IMR-90 (cell line): ENCODE measurements at regions of chr3 and their contacts with region 1.

Region 1: GRCh38 chr3:108406661-108407206 is 103.7 kb downstream of the MYH15 start:
- DNase-seq: peak; percentile 56
- ATAC-seq: peak; percentile 85
- H3K4me3 ChIP-seq: no peak overlapping the region
- H3K27ac ChIP-seq: no peak overlapping the region
- H3K4me1 ChIP-seq: no peaks in the 10 kb centered on the region
- H3K27me3 ChIP-seq: no peaks in the 10 kb centered on the region; the same call in 1 of the 2 replicates
- CTCF ChIP-seq: peak; percentile 61
- POLR2A ChIP-seq: no peak
- RAD21 ChIP-seq: peak; percentile 65

Region 2: GRCh38 chr3:107676469-107677309 is 730.0 kb before region 1 on chr3:
- CTCF ChIA-PET with region 1: no interaction called
- POLR2A ChIA-PET with region 1: no interaction called
- dilution Hi-C with region 1: no loop called
- in situ Hi-C with region 1: no loop called
- intact Hi-C with region 1: loop called (anchors 5 kb)
- DNase-seq: peak; percentile 43
- ATAC-seq: peak; percentile 54; the same call in 1 of the 2 replicates
- H3K4me3 ChIP-seq: no peak overlapping the region
- H3K27ac ChIP-seq: no peak overlapping the region
- H3K4me1 ChIP-seq: 0 out of 2 replicates have a peak, but pooled peaks cover 3% of the 10 kb centered on the region
- H3K27me3 ChIP-seq: no peaks in the 10 kb centered on the region
- CTCF ChIP-seq: peak; percentile 57
- POLR2A ChIP-seq: no peak
- RAD21 ChIP-seq: peak; percentile 50

Region 3: DNA sequence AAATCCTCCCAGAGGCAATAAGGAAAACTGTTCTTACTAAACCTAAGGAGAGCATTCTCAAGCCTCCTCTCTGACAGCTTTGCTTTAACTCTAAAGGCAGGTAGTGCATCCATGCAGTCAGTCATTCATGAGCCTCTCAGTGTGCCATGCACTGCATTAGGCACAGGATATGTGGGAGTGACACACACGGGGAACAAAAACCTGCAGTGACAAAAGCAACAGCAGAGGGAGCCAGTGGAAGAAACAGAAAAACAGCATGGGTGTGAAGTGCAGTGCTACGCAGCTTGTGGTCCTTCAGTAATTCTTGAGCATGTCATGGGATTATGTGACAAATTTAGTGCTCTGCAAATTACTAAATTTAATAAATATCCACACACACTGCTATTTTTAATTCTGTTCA is 653.3 kb before region 1 on chr3:
- CTCF ChIA-PET with region 1: no interaction called
- POLR2A ChIA-PET with region 1: no interaction called
- dilution Hi-C with region 1: no loop called
- in situ Hi-C with region 1: no loop called
- intact Hi-C with region 1: loop called (anchors 10 kb)
- DNase-seq: peak; percentile 30
- ATAC-seq: peak; percentile 61; the same call in 1 of the 2 replicates
- H3K4me3 ChIP-seq: no peak overlapping the region
- H3K27ac ChIP-seq: no peak overlapping the region
- H3K4me1 ChIP-seq: no peaks in the 10 kb centered on the region; the same call in 1 of the 2 replicates
- H3K27me3 ChIP-seq: no peaks in the 10 kb centered on the region
- CTCF ChIP-seq: peak; percentile 44
- POLR2A ChIP-seq: no peak
- RAD21 ChIP-seq: peak; percentile 35; the same call in 1 of the 2 replicates

Region 4: DNA sequence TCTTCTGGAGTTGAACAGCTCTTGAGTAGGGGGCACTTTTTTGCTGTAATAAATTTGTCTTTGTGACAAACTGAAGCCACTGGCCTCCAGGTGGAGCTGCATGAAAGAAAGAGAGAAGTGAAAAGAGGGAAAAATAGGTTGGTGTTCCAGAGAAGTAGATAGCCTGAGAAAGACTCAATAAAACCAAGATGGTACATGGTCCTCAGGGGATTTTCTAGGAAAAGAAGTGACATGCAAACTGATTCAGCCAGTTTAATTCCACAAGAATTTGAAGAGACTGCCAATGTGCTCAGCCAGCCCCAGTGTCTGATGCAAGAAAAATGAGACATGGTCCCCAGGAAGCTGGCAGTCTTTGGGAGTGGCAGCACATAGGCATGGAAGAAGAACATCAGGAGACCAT is 468.6 kb before region 1 on chr3:
- CTCF ChIA-PET with region 1: interaction called, 3 read pairs
- POLR2A ChIA-PET with region 1: no interaction called
- dilution Hi-C with region 1: no loop called
- in situ Hi-C with region 1: no loop called
- intact Hi-C with region 1: loop called (anchors 1 kb)
- DNase-seq: peak; percentile 42
- ATAC-seq: peak; percentile 62
- H3K4me3 ChIP-seq: no peak overlapping the region
- H3K27ac ChIP-seq: no peak overlapping the region
- H3K4me1 ChIP-seq: no peaks in the 10 kb centered on the region
- H3K27me3 ChIP-seq: peaks cover 2% of the 10 kb centered on the region
- CTCF ChIP-seq: peak; percentile 57
- POLR2A ChIP-seq: no peak
- RAD21 ChIP-seq: peak; percentile 64

Region 5: GRCh38 chr3:108062051-108062450 is 344.7 kb before region 1 on chr3:
- CTCF ChIA-PET with region 1: no interaction called
- POLR2A ChIA-PET with region 1: no interaction called
- dilution Hi-C with region 1: no loop called
- in situ Hi-C with region 1: no loop called
- intact Hi-C with region 1: loop called (anchors 10 kb)
- DNase-seq: no peak
- ATAC-seq: no peak
- H3K4me3 ChIP-seq: no peak overlapping the region
- H3K27ac ChIP-seq: no peak overlapping the region
- H3K4me1 ChIP-seq: peaks cover 6% of the 10 kb centered on the region
- H3K27me3 ChIP-seq: no peaks in the 10 kb centered on the region
- CTCF ChIP-seq: no peak
- POLR2A ChIP-seq: no peak
- RAD21 ChIP-seq: no peak

Region 6: GRCh38 chr3:108153451-108153981 is 253.2 kb before region 1 on chr3:
- CTCF ChIA-PET with region 1: no interaction called
- POLR2A ChIA-PET with region 1: no interaction called
- dilution Hi-C with region 1: no loop called
- in situ Hi-C with region 1: no loop called
- intact Hi-C with region 1: loop called (anchors 10 kb)
- DNase-seq: peak; percentile 75
- ATAC-seq: peak; percentile 82
- H3K4me3 ChIP-seq: no peak overlapping the region
- H3K27ac ChIP-seq: no peak overlapping the region
- H3K4me1 ChIP-seq: peaks cover 11% of the 10 kb centered on the region
- H3K27me3 ChIP-seq: no peaks in the 10 kb centered on the region
- CTCF ChIP-seq: peak; percentile 65
- POLR2A ChIP-seq: no peak
- RAD21 ChIP-seq: peak; percentile 76

Region 7: DNA sequence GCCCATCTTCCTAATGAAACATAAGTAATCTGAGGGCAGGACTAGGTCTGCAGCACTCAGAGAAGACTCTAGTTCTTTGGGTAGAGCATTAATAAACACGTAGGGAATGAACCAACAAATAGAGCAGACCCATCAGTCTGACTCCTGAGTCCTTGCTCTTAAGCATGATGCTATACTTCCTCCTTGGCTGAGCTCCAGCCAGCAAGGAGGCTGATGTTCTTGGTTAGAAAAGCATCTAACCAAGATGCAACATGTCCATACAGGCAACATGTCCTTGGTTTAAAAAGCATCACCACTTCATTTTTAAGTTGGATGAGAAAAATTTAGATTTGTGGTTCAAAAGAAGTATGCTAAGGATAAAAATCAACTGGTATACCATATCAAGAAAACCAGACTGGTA is 112.2 kb after region 1 on chr3:
- CTCF ChIA-PET with region 1: no interaction called
- POLR2A ChIA-PET with region 1: no interaction called
- dilution Hi-C with region 1: no loop called
- in situ Hi-C with region 1: no loop called
- intact Hi-C with region 1: no loop called
- DNase-seq: peak; percentile 18
- ATAC-seq: no peak
- H3K4me3 ChIP-seq: no peak overlapping the region
- H3K27ac ChIP-seq: no peak overlapping the region
- H3K4me1 ChIP-seq: no peaks in the 10 kb centered on the region
- H3K27me3 ChIP-seq: peaks cover 1% of the 10 kb centered on the region; the same call in 1 of the 2 replicates
- CTCF ChIP-seq: no peak
- POLR2A ChIP-seq: no peak
- RAD21 ChIP-seq: no peak